Activated T-helper 2 cell treated with anti-CD3 and anti-CD28 coated beads, Interferon-gamma antibody, Interleukin-2, Interleukin-4, amounts not matched to agents 10 μg/mL and 5 μg/mL and 100 μg/mL, durations not matched to agents 14 hours and 24 hours and 36 hours (primary cell): ENCODE measurements at regions of chr1 and their contacts with region 1.

Region 1: DNA sequence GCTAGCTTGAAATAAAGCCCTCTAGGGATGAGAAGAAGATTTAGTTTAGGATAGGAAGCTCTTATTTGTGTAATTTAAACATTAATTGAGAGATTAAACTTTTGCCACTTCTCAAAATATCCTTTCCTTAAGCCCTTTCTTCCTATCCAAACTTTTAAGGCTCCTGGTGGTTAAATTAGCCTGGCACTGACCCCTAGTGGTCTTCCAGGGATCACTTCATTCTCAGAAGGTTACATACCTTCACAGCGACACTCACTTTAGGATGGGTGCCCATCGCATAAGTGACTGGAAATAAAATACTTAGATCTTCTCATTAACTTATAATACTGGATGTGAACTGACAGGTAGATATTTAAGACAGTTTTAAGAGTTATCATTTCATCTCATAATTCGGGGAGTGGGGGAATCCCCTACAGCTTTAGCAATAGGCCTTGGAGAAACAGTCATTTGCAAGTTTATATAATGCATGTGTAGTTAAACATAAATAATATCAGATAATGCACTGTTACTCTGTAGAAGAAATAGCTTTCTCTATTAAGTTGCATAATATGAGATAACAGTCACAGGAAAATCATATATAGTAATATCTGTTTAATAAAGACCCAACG is 7.4 kb downstream of the LHX9 start:
- DNase-seq: no peak
- H3K4me3 Mint-ChIP-seq: no peak overlapping the region
- H3K27ac Mint-ChIP-seq: no peak overlapping the region
- H3K4me1 Mint-ChIP-seq: peaks cover 28% of the 10 kb centered on the region
- H3K27me3 Mint-ChIP-seq: peaks cover 73% of the 10 kb centered on the region

Region 2: GRCh38 chr1:197521118-197521739 is 403.4 kb before region 1 on chr1:
- intact Hi-C with region 1: loop called (anchors 2 kb)
- DNase-seq: no peak
- H3K4me3 Mint-ChIP-seq: no peak overlapping the region
- H3K27ac Mint-ChIP-seq: no peak overlapping the region
- H3K4me1 Mint-ChIP-seq: peaks cover 5% of the 10 kb centered on the region
- H3K27me3 Mint-ChIP-seq: no peaks in the 10 kb centered on the region